ENCODE measurements at regions of chr17 and their contacts with region 1.

Region 1: DNA sequence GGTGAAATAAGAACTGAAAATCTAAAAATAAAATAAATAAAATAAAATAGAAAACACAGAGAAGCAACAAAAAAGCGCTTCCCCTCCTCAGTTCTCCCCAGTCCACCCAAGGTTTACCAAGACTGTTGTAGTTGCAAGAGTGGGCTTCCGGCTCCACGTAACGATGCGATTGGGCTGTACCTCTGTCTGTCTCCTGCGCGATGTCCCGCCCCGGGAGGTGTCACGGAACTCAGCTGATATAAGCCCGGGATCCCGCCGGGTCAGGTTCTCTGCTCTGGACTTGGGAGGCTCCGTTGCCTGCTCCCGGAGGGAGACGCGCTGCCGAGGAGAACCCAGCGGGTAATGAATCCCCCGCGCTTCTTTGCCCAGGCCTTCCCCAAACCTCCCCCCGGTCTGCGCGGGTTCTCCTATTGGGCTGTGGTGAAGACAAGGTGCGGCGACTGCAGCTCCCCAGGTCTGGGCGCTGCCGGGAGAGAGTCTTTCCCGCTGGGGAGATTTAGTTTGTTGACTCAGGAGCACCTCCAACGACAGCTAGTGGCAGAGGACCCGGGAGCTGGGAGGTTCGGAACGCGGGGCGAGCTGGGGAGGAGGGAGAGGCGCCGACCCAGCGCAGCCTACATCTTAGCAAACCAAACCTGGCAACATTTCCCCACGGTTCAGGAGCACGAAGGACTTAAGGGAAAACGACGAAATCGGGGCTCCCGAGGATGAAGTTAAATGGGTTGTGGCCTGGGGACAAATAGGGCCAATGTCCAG is at the start of gene SLFN5:
- DNase-seq: peak; percentile 90
- H3K4me3 Mint-ChIP-seq: peak within 1 kb of the TSS; percentile 96
- H3K27ac Mint-ChIP-seq: peak within 1 kb of the TSS; percentile 96
- H3K4me1 Mint-ChIP-seq: peaks cover 77% of the 10 kb centered on the region
- H3K27me3 Mint-ChIP-seq: no peaks in the 10 kb centered on the region
- total RNA-seq, gene SLFN5: 10.4 and 11.0 TPM in 2 replicates

Region 2: DNA sequence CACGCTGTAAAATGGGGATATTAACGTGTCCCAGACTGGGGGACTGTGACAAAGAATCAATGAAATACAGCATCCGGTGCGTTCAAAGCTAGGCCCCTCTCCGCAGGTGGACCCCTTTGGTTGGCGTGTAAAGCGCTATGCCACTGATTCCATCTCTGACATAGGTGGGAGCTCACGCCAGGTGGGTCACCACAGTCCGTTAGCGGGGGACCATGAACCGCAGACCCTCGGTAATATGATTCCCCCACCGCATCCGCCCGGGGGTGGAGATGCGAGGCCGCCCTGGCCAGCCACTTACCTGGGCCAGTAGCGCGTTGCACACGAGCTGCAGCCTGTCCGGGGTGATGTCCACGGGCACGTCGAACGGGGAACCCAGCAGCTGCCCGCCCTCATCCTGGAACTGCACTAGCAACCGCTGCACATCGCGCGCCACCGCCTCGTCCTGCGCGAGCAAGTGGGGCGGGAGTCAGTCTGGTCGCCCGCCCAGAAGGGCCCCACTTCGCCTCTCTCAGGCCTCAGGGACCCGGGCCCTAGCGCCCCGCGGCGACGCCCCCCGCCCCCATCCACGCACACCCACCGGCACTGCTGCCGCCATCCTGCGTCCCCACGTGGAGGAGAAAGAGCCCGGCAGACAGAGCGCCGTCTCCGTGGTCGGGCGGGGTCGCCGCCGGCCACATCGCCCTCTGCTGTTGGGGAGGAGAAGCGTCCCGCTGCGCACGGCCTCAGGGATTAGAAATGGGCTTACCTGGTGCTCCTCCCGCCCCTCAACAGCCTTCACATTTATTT is 101.1 kb before region 1 on chr17 and contains the start of gene NLE1:
- intact Hi-C with region 1: loop called (anchors 1 kb)
- DNase-seq: peak; percentile 85
- H3K4me3 Mint-ChIP-seq: peak within 1 kb of the TSS; percentile 86
- H3K27ac Mint-ChIP-seq: peak within 1 kb of the TSS; percentile 80
- H3K4me1 Mint-ChIP-seq: no peaks in the 10 kb centered on the region
- H3K27me3 Mint-ChIP-seq: no peaks in the 10 kb centered on the region
- total RNA-seq, gene NLE1: 51.1 and 54.4 TPM in 2 replicates

Region 3: DNA sequence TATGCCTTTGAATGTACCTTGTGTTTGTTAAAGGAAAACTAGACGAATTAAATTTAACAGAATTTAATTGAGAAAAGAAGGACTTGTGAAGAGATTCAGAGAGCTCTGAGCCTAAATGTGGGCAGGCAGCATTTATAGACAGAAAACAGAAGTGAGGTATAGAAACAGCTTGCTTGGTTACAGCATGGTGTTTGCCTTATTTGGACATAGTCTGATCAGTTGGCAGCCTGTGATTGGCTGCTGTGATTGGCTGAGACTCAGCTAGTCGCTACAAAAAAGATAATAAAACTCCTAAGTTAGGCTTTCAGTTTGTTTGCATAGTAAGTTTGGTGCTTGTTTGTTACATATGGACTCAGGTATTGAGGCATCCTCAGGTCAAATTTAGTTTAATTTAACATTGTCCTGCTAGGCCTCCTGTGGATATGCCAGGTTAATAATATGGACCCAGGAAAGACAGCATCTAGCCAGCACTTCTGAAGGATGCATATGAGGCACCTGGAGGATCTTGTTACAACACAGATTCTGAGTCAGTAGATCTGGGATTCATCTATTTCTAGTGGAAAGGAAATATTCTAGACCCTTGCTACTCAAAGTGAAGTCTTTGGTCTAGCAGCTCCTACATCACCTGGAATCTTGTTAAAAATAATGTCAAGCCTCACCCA is 43.3 kb after region 1 on chr17:
- intact Hi-C with region 1: loop called (anchors 5 kb)
- DNase-seq: no peak
- H3K4me3 Mint-ChIP-seq: no peak overlapping the region
- H3K27ac Mint-ChIP-seq: no peak overlapping the region
- H3K4me1 Mint-ChIP-seq: peaks cover 27% of the 10 kb centered on the region
- H3K27me3 Mint-ChIP-seq: peaks cover 14% of the 10 kb centered on the region

Region 4: DNA sequence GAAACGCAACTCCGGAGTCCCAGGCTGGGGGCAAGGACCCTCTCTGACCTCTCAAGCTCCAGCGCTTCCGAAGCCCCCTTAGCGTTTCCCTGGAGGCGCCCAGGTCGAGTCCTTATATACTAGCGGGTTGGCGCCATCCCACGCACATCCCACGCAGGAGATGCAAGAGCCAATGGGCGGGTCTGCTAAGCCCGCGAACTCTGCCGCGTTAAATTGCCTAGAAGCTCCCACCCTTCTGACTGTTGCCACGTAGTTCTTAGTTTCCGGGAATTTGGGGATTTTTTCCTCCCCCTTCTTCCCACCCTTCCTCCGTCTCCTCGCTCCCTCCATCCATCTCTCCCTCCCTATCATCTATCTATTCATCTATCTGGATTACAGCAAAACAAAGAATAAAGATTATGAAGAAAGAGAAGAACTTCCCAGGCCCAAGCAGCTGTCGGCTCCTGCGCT is 130.6 kb after region 1 on chr17 and contains the start of gene SLFN11:
- intact Hi-C with region 1: loop called (anchors 1 kb)
- DNase-seq: peak; percentile 79
- H3K4me3 Mint-ChIP-seq: peak within 1 kb of the TSS; percentile 93
- H3K27ac Mint-ChIP-seq: peak within 1 kb of the TSS; percentile 95
- H3K4me1 Mint-ChIP-seq: peaks cover 66% of the 10 kb centered on the region
- H3K27me3 Mint-ChIP-seq: no peaks in the 10 kb centered on the region
- total RNA-seq, gene SLFN11: 70.8 and 76.0 TPM in 2 replicates

Region 5: DNA sequence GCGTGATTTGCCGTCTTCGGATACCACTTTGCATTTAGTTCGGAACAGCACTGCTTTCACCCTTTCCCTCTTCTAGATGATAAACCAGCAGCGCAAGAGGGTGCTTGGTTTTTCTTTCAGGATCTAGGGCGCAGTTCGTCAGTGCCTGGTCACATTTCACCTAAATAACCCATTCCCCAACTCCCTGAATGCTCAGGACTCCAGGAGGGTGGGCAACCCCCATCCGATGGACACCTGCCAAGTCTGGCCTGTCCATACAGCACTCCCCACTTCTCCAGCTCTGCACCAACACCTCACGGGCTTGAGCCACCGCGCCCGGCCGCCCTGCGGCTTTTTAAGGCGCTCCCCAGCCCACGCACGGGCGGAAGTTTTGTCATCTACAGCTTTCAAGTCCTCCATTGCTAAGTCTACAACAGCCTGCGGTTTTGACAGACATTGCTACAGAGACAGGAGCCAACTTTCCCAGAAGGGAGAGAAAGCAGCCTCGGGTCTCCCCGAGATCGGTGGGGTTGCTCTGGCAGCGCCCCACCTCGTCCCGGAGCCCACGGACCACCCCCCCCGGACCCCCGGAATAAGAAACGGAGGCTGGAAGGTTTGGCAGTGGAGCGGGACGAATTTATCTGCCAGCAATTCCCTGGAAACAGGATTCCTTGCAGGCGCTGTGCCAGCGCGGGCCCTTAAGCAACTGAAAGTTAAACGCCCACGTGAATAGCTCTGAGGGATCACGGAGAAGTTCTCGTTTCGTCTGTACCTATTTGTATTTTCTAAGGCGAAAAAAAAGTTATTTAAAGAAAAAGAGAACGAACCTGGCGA is 244.1 kb after region 1 on chr17:
- intact Hi-C with region 1: loop called (anchors 1 kb)
- DNase-seq: peak; percentile 71
- H3K4me3 Mint-ChIP-seq: peak overlapping the region; percentile 92
- H3K27ac Mint-ChIP-seq: peak overlapping the region; percentile 93
- H3K4me1 Mint-ChIP-seq: peaks cover 78% of the 10 kb centered on the region
- H3K27me3 Mint-ChIP-seq: peaks cover 2% of the 10 kb centered on the region

Region 6: GRCh38 chr17:35587074-35587971 is 344.3 kb after region 1 on chr17 and contains the start of gene AP2B1:
- intact Hi-C with region 1: loop called (anchors 1 kb)
- DNase-seq: peak; percentile 96
- H3K4me3 Mint-ChIP-seq: peak within 1 kb of the TSS; percentile 94
- H3K27ac Mint-ChIP-seq: peak within 1 kb of the TSS; percentile 96
- H3K4me1 Mint-ChIP-seq: peaks cover 38% of the 10 kb centered on the region
- H3K27me3 Mint-ChIP-seq: peaks cover 3% of the 10 kb centered on the region
- total RNA-seq, gene AP2B1: 156 and 167 TPM in 2 replicates

Measured in activated T-helper 1 cell treated with anti-CD3 and anti-CD28 coated beads, Interleukin-12 subunit alpha, Interleukin-12 subunit beta, Interleukin-2, Interleukin-4 antibody, amounts not matched to agents 30 ng/mL and 10 ng/mL and 1 ng/mL, durations not matched to agents 14 hours and 24 hours and 36 hours (primary cell).